OCI-LY7 (cell line): ENCODE measurements at regions of chr19 and their contacts with region 1.

Region 1: GRCh38 chr19:1189419-1189818 is 15.4 kb upstream of the SBNO2 start:
- DNase-seq: no peak
- H3K4me3 ChIP-seq: no peak overlapping the region
- H3K27ac ChIP-seq: no peak overlapping the region
- H3K4me1 ChIP-seq: peaks cover 5% of the 10 kb centered on the region
- CTCF ChIP-seq: no peak

Region 2: GRCh38 chr19:1057176-1057855 is 132.1 kb before region 1 on chr19:
- CTCF ChIA-PET with region 1: no interaction called
- POLR2A ChIA-PET with region 1: no interaction called
- intact Hi-C with region 1: loop called (anchors 5 kb)
- DNase-seq: peak; percentile 70
- H3K4me3 ChIP-seq: no peak overlapping the region
- H3K27ac ChIP-seq: peak overlapping the region; percentile 41
- H3K4me1 ChIP-seq: peaks cover 21% of the 10 kb centered on the region
- CTCF ChIP-seq: peak; percentile 75

Region 3: GRCh38 chr19:1285737-1286360 is 96.4 kb after region 1 on chr19 and contains the start of gene EFNA2:
- CTCF ChIA-PET with region 1: no interaction called
- POLR2A ChIA-PET with region 1: no interaction called
- intact Hi-C with region 1: no loop called
- DNase-seq: no peak
- H3K4me3 ChIP-seq: no peak within 1 kb of the TSS
- H3K27ac ChIP-seq: no peak within 1 kb of the TSS
- H3K4me1 ChIP-seq: no peaks in the 10 kb centered on the region
- CTCF ChIP-seq: no peak
- total RNA-seq, gene EFNA2: not detected in 2 replicates